Ascending aorta (tissue), 2 donors: ENCODE measurements at regions of chr9 and their contacts with region 1.

Region 1: DNA sequence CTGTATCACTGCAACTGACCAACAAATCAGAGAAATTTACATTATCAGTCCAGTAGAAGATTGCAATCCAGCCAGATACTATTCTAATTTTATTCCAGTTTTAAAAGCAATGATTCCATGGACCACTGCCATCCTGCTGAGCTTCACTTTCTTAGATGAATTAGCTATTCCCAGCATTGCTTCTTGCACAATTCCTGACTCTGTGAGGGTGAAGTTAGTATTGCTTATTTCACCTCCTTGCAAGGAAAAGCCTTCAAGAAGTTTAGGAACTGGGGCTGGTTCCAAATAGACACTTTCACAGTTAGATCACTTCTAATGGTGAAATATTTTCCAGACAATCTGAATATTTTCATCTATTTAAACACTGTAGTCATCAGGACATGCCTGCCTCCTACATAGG is 338.6 kb upstream of the TNC start:
- DNase-seq: peak in 1 of 2 donors; percentile 68
- H3K4me3 ChIP-seq: no peak overlapping the region
- H3K27ac ChIP-seq: peak overlapping the region; percentile 9 to 35
- H3K4me1 ChIP-seq: peaks cover 5 to 14% of the 10 kb centered on the region in 2 donors
- H3K27me3 ChIP-seq: no peaks in the 10 kb centered on the region
- CTCF ChIP-seq: no peak

Region 2: GRCh38 chr9:115211413-115212124 is 244.9 kb before region 1 on chr9:
- intact Hi-C with region 1: no loop called
- DNase-seq: no peak
- H3K4me3 ChIP-seq: no peak overlapping the region
- H3K27ac ChIP-seq: no peak overlapping the region
- H3K4me1 ChIP-seq: no peaks in the 10 kb centered on the region
- H3K27me3 ChIP-seq: no peaks in the 10 kb centered on the region
- CTCF ChIP-seq: no peak

Region 3: GRCh38 chr9:115422932-115423440 is 33.5 kb before region 1 on chr9:
- intact Hi-C with region 1: loop called (anchors 2 kb)
- DNase-seq: peak; percentile 29 to 82
- H3K4me3 ChIP-seq: no peak overlapping the region
- H3K27ac ChIP-seq: peak overlapping the region; percentile 49 to 75
- H3K4me1 ChIP-seq: peaks cover 0 to 3% of the 10 kb centered on the region in 2 donors
- H3K27me3 ChIP-seq: no peaks in the 10 kb centered on the region
- CTCF ChIP-seq: no peak

Region 4: GRCh38 chr9:115442054-115442453 is 14.5 kb before region 1 on chr9:
- intact Hi-C with region 1: loop called (anchors 2 kb)
- DNase-seq: no peak
- H3K4me3 ChIP-seq: no peak overlapping the region
- H3K27ac ChIP-seq: peak overlapping the region; percentile 63 to 82
- H3K4me1 ChIP-seq: peaks cover 0 to 17% of the 10 kb centered on the region in 2 donors
- H3K27me3 ChIP-seq: no peaks in the 10 kb centered on the region
- CTCF ChIP-seq: no peak

Region 5: DNA sequence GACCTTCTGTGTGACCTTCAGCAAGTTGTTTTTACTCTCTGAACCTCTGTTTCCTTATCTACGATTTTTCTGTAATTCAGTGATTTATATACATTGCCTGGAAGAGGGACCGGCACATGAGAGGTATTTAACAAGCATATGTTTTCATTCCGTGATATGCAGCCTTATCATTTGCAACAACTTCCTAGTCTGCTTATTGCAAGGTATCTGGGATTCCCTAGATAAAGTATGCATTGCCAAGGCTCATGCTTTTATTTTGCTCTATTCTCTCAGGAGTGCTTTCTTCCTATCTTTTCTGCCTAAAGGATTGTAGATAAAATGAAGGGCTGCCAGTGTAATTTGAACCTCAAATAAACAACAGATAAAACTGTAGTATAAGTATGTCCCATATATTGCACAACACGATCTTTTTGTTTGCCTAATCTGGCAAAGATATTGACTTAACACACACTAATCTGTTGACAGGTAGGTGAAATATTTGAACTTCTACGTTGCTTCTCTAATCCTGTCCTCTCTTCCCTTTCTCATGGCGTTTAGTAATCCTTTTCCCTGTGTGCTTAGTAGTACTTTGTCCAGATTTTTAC is 38.6 kb after region 1 on chr9:
- intact Hi-C with region 1: loop called (anchors 2 kb)
- DNase-seq: no peak
- H3K4me3 ChIP-seq: no peak overlapping the region
- H3K27ac ChIP-seq: peak overlapping the region; percentile 68 to 78
- H3K4me1 ChIP-seq: peaks cover 4 to 18% of the 10 kb centered on the region in 2 donors
- H3K27me3 ChIP-seq: no peaks in the 10 kb centered on the region
- CTCF ChIP-seq: no peak